Right ventricle myocardium inferior (tissue), 1 donor: ENCODE measurements at regions of chr5 and their contacts with region 1.

Region 1: DNA sequence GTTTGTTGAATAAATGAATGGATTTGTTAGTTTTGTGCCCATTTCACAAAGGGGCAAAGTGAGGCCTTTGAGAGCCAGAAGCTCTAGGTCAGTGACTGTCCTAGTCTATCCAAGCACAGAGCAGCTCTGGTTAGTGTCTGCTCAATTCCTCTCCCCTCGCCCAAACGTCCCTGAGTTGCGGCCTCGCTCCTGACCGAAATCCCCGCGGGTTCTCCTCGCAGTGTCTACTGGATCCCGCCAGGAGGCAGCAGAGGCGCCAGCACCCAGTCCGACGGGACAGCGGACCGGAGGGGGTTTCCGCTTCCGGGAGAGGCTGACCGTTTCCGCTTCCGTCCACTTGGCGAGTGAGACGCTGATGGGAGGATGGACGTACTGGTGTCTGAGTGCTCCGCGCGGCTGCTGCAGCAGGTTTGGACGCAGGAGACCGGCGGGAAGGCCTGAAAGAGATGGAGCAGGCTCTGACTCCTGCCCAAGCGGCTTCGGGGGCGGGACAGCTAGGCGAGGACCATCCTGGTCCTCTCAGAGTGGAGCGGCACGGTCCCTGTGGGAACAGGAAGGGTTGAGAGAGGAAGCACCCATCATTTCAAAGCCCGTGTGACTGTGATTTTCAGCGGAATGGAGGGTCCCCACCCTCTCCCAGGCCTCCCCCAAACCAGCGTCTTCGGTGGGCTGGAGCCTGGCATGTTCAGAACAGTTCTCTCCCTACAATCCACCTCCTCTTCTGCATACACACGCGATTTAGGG is at the start of gene RARS1:
- DNase-seq: peak; percentile 94
- ATAC-seq: peak; percentile 98
- total RNA-seq, gene RARS1: 47.1 TPM

Region 2: GRCh38 chr5:168268949-168269943 is 217.1 kb before region 1 on chr5:
- intact Hi-C with region 1: loop called (anchors 2 kb)
- DNase-seq: peak; percentile 80
- ATAC-seq: peak; percentile 85

Region 3: DNA sequence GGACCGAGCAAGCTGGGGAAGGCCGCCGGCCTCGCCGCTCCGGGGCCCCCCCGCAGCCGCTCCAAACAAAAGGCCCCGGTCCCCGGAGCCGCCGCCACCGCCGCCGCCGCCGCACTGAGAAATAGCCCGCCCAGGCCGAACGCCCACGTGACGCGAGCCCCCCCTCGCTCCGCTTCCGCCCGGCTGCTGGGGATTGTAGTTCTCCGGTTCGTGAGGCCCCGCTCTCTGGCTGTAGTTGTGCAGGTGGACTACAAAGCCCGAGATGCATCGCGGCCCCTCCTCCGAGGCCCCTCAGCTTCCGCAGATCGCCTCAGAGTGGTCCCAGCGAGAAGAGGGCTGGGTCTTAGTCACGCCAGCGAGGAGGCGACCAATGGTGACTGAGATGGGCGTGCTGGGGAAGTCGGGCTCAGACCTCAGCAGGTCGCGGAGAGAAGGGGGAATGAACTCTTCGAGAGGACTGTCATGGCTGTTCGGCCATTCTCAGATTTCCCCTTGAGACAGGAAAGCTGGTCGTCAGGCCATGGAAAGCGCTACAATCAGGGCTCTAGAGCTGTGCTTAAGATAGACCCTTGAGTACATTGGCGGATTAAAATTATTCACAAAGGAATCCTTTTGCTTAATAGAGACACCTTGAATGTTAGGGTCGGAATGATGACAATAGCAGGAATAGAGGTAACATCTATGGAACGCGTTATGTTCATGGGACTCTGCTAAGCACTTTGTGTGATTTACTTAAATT is 93.3 kb after region 1 on chr5:
- intact Hi-C with region 1: loop called (anchors 5 kb)
- DNase-seq: peak; percentile 98
- ATAC-seq: peak; percentile 99